ENCODE measurements at regions of chr18 and their contacts with region 1.

Region 1: DNA sequence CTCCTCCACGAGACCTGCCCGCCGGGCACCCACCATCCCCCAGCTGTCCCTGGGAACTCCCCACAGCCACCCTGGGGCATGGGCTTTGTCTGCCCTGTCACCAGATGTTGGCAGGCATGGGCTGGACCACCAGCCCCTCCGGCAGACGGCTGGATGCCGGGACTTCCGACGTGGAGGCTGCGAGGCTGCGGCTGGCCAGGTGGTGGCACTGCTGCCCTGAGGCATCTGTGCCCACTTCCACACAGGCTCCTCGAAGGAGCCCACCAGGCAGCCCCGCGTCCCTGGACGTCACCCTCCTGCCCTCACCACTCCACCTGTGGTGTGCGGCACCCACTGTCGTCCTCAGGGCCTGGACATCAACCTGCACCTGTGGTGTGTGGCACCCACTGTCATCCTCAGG is 319.9 kb upstream of the SALL3 start:
- DNase-seq: peak; percentile 44 to 45
- H3K4me3 ChIP-seq: no peak overlapping the region
- H3K27ac ChIP-seq: no peak overlapping the region
- H3K4me1 ChIP-seq: no peaks in the 10 kb centered on the region
- H3K27me3 ChIP-seq: no peaks in the 10 kb centered on the region
- CTCF ChIP-seq: peak; percentile 28 to 80 (median 67)
- POLR2A ChIP-seq: no peak

Region 2: GRCh38 chr18:78984941-78985784 is 325.4 kb after region 1 on chr18:
- intact Hi-C with region 1: loop called (anchors 5 kb)
- DNase-seq: no peak
- H3K4me3 ChIP-seq: no peak overlapping the region
- H3K27ac ChIP-seq: no peak overlapping the region
- H3K4me1 ChIP-seq: peaks cover 0 to 11% of the 10 kb centered on the region in 2 donors
- H3K27me3 ChIP-seq: peaks cover 41% of the 10 kb centered on the region
- CTCF ChIP-seq: no peak
- POLR2A ChIP-seq: no peak

Measured in thyroid gland (tissue), 4 donors.